ENCODE measurements at regions of chr3 and their contacts with region 1.

Region 1: GRCh38 chr3:29280404-29281093 is at the start of gene RBMS3:
- DNase-seq: peak; percentile 97
- ATAC-seq: peak; percentile 82
- H3K4me3 ChIP-seq: peak within 1 kb of the TSS; percentile 91
- H3K27ac ChIP-seq: peak within 1 kb of the TSS; percentile 95
- H3K4me1 ChIP-seq: peaks cover 7% of the 10 kb centered on the region
- H3K27me3 ChIP-seq: no peaks in the 10 kb centered on the region
- CTCF ChIP-seq: peak; percentile 65
- POLR2A ChIP-seq: peak; percentile 79; the same call in 1 of the 2 replicates
- RAD21 ChIP-seq: peak; percentile 73
- total RNA-seq, gene RBMS3: 110 and 127 TPM in 2 replicates

Region 2: DNA sequence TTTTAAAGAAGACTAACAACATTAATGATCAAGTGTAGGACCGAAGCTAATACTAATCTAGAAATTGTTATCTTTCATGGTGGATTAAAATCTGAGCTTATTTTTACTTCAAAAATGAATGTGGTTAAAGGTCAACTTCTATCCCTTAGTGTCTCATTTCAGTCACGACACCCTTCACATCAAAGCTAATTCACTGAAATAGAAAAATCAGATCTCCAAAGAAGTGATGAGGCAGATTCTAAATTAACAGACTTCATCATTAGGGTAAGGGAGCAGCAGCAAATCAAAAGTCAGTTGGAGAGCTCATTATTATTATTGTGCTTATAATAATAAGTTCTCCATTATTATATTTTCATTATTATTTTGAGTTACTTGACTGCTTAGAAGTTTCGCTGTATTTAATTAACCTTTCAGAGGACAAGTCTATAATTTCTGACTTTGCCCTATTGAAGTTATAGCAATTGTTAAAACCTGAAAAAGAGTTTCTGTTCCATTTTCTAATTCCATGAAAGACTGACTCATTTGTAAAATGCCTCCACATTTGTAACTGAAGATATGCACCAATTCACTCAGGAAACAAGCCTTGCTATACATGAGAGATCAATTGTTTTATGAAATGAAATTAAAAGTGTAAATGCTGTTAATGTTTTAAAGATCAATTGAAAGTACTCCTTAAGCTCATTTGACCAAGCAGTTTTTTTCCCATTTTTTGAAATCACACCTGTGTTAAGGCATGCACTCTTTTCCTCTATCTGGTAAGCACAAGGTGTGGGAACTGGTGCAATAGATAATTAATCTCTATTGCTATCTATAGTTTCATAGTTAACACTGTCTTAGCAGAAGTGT is 1062.3 kb before region 1 on chr3:
- CTCF ChIA-PET with region 1: no interaction called
- POLR2A ChIA-PET with region 1: no interaction called
- dilution Hi-C with region 1: no loop called
- in situ Hi-C with region 1: no loop called
- intact Hi-C with region 1: no loop called
- DNase-seq: no peak
- ATAC-seq: no peak
- H3K4me3 ChIP-seq: no peak overlapping the region
- H3K27ac ChIP-seq: no peak overlapping the region
- H3K4me1 ChIP-seq: no peaks in the 10 kb centered on the region
- H3K27me3 ChIP-seq: no peaks in the 10 kb centered on the region
- CTCF ChIP-seq: no peak
- POLR2A ChIP-seq: no peak
- RAD21 ChIP-seq: no peak

Region 3: DNA sequence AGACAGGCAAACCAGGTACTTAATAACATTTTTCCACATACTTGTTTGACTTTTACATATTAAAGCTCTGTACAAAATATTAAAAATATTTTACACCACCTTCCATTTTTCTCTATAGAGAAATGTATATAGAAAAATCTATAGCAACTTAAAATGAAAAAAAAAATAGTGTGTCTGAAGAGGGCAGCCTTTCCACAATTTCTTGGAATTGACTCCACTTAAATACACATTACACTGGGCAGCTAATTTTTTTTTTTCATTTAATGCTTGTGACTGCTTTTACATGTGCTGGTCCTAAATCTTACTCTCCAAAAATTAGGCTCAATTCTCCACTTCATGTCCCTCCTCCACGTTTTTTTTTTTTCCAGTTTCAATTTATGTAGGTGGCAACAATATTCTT is 426.7 kb before region 1 on chr3:
- CTCF ChIA-PET with region 1: interaction called, 4 read pairs
- POLR2A ChIA-PET with region 1: no interaction called
- dilution Hi-C with region 1: no loop called
- in situ Hi-C with region 1: no loop called
- intact Hi-C with region 1: loop called (anchors 5 kb)
- DNase-seq: peak; percentile 45
- ATAC-seq: no peak
- H3K4me3 ChIP-seq: no peak overlapping the region
- H3K27ac ChIP-seq: no peak overlapping the region
- H3K4me1 ChIP-seq: no peaks in the 10 kb centered on the region
- H3K27me3 ChIP-seq: peaks cover 4% of the 10 kb centered on the region; the same call in 1 of the 2 replicates
- CTCF ChIP-seq: peak; percentile 47
- POLR2A ChIP-seq: no peak
- RAD21 ChIP-seq: peak; percentile 50

Region 4: GRCh38 chr3:29186982-29187725 is 93.4 kb before region 1 on chr3:
- CTCF ChIA-PET with region 1: interaction called, 3 read pairs
- POLR2A ChIA-PET with region 1: no interaction called
- dilution Hi-C with region 1: no loop called
- in situ Hi-C with region 1: no loop called
- intact Hi-C with region 1: loop called (anchors 1 kb)
- DNase-seq: peak; percentile 92
- ATAC-seq: peak; percentile 25
- H3K4me3 ChIP-seq: no peak overlapping the region
- H3K27ac ChIP-seq: peak overlapping the region; percentile 78
- H3K4me1 ChIP-seq: peaks cover 16% of the 10 kb centered on the region
- H3K27me3 ChIP-seq: no peaks in the 10 kb centered on the region
- CTCF ChIP-seq: no peak
- POLR2A ChIP-seq: no peak
- RAD21 ChIP-seq: no peak

Region 5: DNA sequence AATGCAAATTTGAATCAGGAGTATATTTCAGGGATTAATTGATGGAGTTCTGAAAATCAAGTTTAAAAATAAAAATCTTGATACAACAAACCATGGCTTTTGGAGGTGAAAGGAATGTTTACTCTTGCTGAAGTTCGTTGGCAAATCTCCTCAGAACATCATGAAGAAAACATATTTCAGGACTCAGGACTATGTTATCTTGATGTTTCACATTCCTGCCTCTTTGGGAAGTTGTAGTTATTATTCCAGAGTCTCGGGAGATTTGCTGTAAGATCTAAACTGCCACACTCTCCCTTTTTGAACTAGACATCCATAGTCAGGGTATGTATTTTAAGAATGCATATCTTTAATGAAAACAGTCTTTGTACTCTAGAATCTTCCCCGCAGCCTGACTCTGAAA is 271.5 kb after region 1 on chr3:
- CTCF ChIA-PET with region 1: interaction called, 3 read pairs
- POLR2A ChIA-PET with region 1: no interaction called
- dilution Hi-C with region 1: no loop called
- in situ Hi-C with region 1: no loop called
- intact Hi-C with region 1: loop called (anchors 5 kb)
- DNase-seq: peak; percentile 35
- ATAC-seq: peak; percentile 54
- H3K4me3 ChIP-seq: no peak overlapping the region
- H3K27ac ChIP-seq: no peak overlapping the region
- H3K4me1 ChIP-seq: peaks cover 8% of the 10 kb centered on the region
- H3K27me3 ChIP-seq: no peaks in the 10 kb centered on the region
- CTCF ChIP-seq: no peak
- POLR2A ChIP-seq: no peak
- RAD21 ChIP-seq: no peak

Region 6: GRCh38 chr3:29597376-29598013 is 316.9 kb after region 1 on chr3:
- CTCF ChIA-PET with region 1: no interaction called
- POLR2A ChIA-PET with region 1: no interaction called
- dilution Hi-C with region 1: no loop called
- in situ Hi-C with region 1: no loop called
- intact Hi-C with region 1: no loop called
- DNase-seq: peak; percentile 36
- ATAC-seq: peak; percentile 62
- H3K4me3 ChIP-seq: peak overlapping the region; percentile 8; the same call in 1 of the 2 replicates
- H3K27ac ChIP-seq: no peak overlapping the region
- H3K4me1 ChIP-seq: no peaks in the 10 kb centered on the region
- H3K27me3 ChIP-seq: no peaks in the 10 kb centered on the region
- CTCF ChIP-seq: no peak
- POLR2A ChIP-seq: no peak
- RAD21 ChIP-seq: no peak

Region 7: DNA sequence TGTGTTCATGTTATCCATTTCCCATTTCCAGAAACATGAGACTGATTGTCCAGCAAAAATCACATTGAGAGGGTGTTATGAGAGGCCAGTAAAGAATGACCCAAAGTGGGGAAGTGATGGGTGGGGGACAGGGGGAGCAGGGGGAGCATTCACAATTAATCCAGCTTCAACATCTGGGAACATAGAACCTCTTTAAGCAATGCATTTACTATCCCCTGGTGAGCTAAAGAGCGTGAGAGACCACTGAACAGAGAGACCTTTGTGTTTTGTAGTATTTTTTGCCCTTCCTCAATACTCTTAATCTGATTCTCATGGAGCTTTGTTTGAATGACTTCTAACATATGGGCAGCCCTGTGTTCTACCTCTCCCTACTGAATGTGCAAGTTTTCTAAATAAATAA is 464.9 kb after region 1 on chr3:
- CTCF ChIA-PET with region 1: no interaction called
- POLR2A ChIA-PET with region 1: interaction called, 12 read pairs
- dilution Hi-C with region 1: no loop called
- in situ Hi-C with region 1: no loop called
- intact Hi-C with region 1: no loop called
- DNase-seq: no peak
- ATAC-seq: no peak
- H3K4me3 ChIP-seq: no peak overlapping the region
- H3K27ac ChIP-seq: no peak overlapping the region
- H3K4me1 ChIP-seq: no peaks in the 10 kb centered on the region; the same call in 1 of the 2 replicates
- H3K27me3 ChIP-seq: no peaks in the 10 kb centered on the region
- CTCF ChIP-seq: no peak
- POLR2A ChIP-seq: no peak
- RAD21 ChIP-seq: no peak

Region 8: GRCh38 chr3:30199096-30199759 is 918.7 kb after region 1 on chr3:
- CTCF ChIA-PET with region 1: no interaction called
- POLR2A ChIA-PET with region 1: no interaction called
- dilution Hi-C with region 1: no loop called
- in situ Hi-C with region 1: no loop called
- intact Hi-C with region 1: loop called (anchors 5 kb)
- DNase-seq: peak; percentile 55
- ATAC-seq: peak; percentile 40; the same call in 1 of the 2 replicates
- H3K4me3 ChIP-seq: no peak overlapping the region
- H3K27ac ChIP-seq: no peak overlapping the region
- H3K4me1 ChIP-seq: peaks cover 6% of the 10 kb centered on the region
- H3K27me3 ChIP-seq: no peaks in the 10 kb centered on the region
- CTCF ChIP-seq: peak; percentile 84
- POLR2A ChIP-seq: no peak
- RAD21 ChIP-seq: peak; percentile 83